A673 (cell line): ENCODE measurements at regions of chr17 and their contacts with region 1.

Region 1: GRCh38 chr17:73118139-73118538 is 25.7 kb upstream of the SLC39A11 start:
- DNase-seq: no peak
- H3K4me3 ChIP-seq: no peak overlapping the region
- H3K27ac ChIP-seq: no peak overlapping the region
- H3K4me1 ChIP-seq: no peaks in the 10 kb centered on the region
- H3K27me3 ChIP-seq: no peaks in the 10 kb centered on the region
- CTCF ChIP-seq: no peak

Region 2: GRCh38 chr17:73133911-73134649 is 15.9 kb after region 1 on chr17:
- CTCF ChIA-PET with region 1: no interaction called
- POLR2A ChIA-PET with region 1: interaction called, 10 read pairs
- intact Hi-C with region 1: no loop called
- DNase-seq: no peak
- H3K4me3 ChIP-seq: no peak overlapping the region
- H3K27ac ChIP-seq: no peak overlapping the region
- H3K4me1 ChIP-seq: peaks cover 5% of the 10 kb centered on the region
- H3K27me3 ChIP-seq: no peaks in the 10 kb centered on the region
- CTCF ChIP-seq: no peak

Region 3: GRCh38 chr17:73148540-73149334 is 30.6 kb after region 1 on chr17:
- CTCF ChIA-PET with region 1: no interaction called
- POLR2A ChIA-PET with region 1: no interaction called
- intact Hi-C with region 1: no loop called
- DNase-seq: no peak
- H3K4me3 ChIP-seq: no peak overlapping the region
- H3K27ac ChIP-seq: no peak overlapping the region
- H3K4me1 ChIP-seq: no peaks in the 10 kb centered on the region
- H3K27me3 ChIP-seq: no peaks in the 10 kb centered on the region
- CTCF ChIP-seq: no peak